Prostate gland (tissue), 2 donors: ENCODE measurements at regions of chr10 and their contacts with region 1.

Region 1: GRCh38 chr10:120942806-120943413 is 91.7 kb downstream of the WDR11 start:
- DNase-seq: peak; percentile 82
- H3K4me3 ChIP-seq: no peak overlapping the region
- H3K27ac ChIP-seq: no peak overlapping the region
- H3K4me1 ChIP-seq: peaks cover 10% of the 10 kb centered on the region
- H3K27me3 ChIP-seq: no peaks in the 10 kb centered on the region
- CTCF ChIP-seq: peak; percentile 76 to 97 (median 89)
- POLR2A ChIP-seq: no peak

Region 2: DNA sequence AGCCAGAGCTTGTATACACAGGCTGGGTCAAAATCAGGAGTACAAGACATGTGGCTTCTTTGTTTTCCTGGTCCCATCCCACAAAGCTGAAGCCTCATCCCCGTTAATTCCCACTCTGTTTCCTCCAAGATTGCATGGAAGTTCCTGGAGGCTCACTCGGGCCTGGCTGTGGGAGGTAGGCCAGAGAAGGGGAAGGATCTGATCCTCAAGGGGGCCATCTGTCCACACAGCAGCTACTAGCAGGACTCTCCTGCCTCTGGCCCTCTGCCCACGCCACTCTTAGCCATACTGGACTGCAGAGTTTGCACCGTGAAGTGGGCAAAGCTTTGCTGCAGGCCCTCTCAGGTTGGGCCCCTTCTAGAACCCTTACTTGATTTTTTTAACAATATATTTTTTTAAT is 494.7 kb after region 1 on chr10:
- intact Hi-C with region 1: loop called (anchors 10 kb)
- DNase-seq: no peak
- H3K4me3 ChIP-seq: no peak overlapping the region
- H3K27ac ChIP-seq: no peak overlapping the region
- H3K4me1 ChIP-seq: no peaks in the 10 kb centered on the region
- H3K27me3 ChIP-seq: no peaks in the 10 kb centered on the region
- CTCF ChIP-seq: no peak
- POLR2A ChIP-seq: no peak

Region 3: GRCh38 chr10:121608469-121609190 is 665.7 kb after region 1 on chr10:
- intact Hi-C with region 1: loop called (anchors 2 kb)
- DNase-seq: no peak
- H3K4me3 ChIP-seq: peak overlapping the region; percentile 7 to 27
- H3K27ac ChIP-seq: no peak overlapping the region
- H3K4me1 ChIP-seq: no peaks in the 10 kb centered on the region
- H3K27me3 ChIP-seq: no peaks in the 10 kb centered on the region
- CTCF ChIP-seq: peak; percentile 91 to 97 (median 94)
- POLR2A ChIP-seq: no peak

Region 4: DNA sequence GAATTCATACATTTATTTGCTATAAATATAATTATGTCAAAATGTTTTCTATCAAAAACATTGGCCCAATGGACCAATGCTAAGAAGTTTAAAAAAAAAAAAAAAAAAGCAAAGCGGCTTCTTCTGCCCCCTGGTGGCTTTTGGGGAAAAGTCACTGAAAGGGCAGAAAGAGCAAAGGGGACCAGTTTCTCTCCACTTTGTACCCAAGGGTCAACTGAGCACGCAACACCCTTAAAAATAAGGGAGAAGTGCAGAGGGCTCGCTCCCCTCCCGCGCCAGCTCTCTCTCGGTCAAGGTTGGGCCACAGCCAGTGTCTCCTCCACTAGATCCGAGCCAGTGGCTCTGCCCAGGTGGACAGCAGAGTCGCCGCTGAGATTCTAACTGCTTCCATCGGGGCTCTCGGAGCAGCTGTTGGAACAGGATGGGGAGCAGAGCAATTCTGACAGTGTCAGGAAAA is 791.7 kb after region 1 on chr10:
- intact Hi-C with region 1: loop called (anchors 5 kb)
- DNase-seq: no peak
- H3K4me3 ChIP-seq: no peak overlapping the region
- H3K27ac ChIP-seq: no peak overlapping the region
- H3K4me1 ChIP-seq: no peaks in the 10 kb centered on the region
- H3K27me3 ChIP-seq: no peaks in the 10 kb centered on the region
- CTCF ChIP-seq: peak; percentile 44 to 48 (median 46)
- POLR2A ChIP-seq: no peak

Region 5: DNA sequence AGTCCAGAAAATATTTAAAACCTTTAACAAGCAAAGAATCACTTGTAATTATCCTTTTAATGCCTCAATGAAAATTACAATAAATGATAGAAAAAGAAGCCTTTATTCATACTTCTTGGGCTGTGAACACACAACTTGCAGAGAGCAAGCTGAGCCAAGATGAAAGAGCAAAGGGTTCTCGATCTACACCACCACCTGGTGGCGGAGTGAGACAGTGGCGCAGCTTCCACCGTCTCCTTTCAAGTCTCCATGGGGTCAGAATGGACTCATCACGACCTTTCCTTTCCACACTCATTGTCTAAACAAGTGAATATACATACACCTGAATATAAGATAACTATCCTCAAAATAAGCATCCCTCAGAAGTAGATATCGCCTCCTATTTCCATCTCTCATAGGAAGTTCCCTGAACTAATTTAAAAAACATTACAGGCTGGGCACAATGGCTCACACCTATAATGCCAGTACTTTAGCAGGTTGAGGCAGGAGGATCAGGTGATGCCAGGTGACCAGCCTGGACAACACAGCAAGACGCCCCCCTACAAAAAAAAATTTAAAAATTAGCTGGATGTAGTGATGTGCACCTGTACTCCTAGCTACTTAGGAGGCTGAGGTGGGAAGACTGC is 944.2 kb after region 1 on chr10:
- intact Hi-C with region 1: loop called (anchors 5 kb)
- DNase-seq: peak; percentile 57
- H3K4me3 ChIP-seq: no peak overlapping the region
- H3K27ac ChIP-seq: no peak overlapping the region
- H3K4me1 ChIP-seq: no peaks in the 10 kb centered on the region
- H3K27me3 ChIP-seq: no peaks in the 10 kb centered on the region
- CTCF ChIP-seq: peak; percentile 52 to 86 (median 81)
- POLR2A ChIP-seq: no peak

Region 6: GRCh38 chr10:121994390-121994961 is 1051.6 kb after region 1 on chr10:
- intact Hi-C with region 1: loop called (anchors 10 kb)
- DNase-seq: peak; percentile 79
- H3K4me3 ChIP-seq: peak overlapping the region in 1 of 2 donors; percentile 19
- H3K27ac ChIP-seq: peak overlapping the region; percentile 90 to 95
- H3K4me1 ChIP-seq: peaks cover 11% of the 10 kb centered on the region
- H3K27me3 ChIP-seq: no peaks in the 10 kb centered on the region
- CTCF ChIP-seq: peak in 2 of 4 experiments; percentile 31 to 32
- POLR2A ChIP-seq: no peak

Region 7: DNA sequence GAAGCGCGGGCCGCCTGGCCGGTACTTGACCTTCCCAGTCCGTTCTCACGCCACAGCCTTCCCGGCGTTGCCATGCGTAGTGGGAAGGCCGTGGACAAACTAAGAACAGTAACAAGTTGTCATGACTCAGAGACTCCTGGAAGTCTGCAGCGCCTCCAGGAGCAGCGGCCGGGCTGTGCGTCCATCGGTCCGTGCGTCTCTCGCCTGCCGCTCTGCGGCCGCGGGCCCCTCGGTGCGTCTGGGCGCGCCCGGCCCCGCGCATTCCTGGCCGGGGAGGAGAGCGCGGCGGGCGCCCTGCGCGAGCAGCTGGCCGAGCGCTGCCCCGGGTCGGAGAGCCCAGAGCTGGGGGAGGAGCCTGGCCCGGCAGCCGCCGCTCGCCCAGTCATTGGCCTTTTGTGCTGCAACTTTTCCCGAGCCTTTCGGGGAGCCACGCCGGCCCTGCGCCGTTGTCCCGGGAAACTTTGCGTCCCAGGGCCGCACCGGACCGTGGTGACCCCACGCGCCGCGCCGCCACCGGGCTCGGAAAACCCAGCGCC is 1169.8 kb after region 1 on chr10:
- intact Hi-C with region 1: loop called (anchors 10 kb)
- DNase-seq: peak; percentile 87
- H3K4me3 ChIP-seq: peak overlapping the region; percentile 55 to 56
- H3K27ac ChIP-seq: peak overlapping the region; percentile 96 to 99
- H3K4me1 ChIP-seq: peaks cover 3% of the 10 kb centered on the region
- H3K27me3 ChIP-seq: no peaks in the 10 kb centered on the region
- CTCF ChIP-seq: peak; percentile 47 to 91 (median 76)
- POLR2A ChIP-seq: peak; percentile 86